Naive thymus-derived CD4-positive, alpha-beta T cell (primary cell): ENCODE measurements at regions of chr11 and their contacts with region 1.

Region 1: DNA sequence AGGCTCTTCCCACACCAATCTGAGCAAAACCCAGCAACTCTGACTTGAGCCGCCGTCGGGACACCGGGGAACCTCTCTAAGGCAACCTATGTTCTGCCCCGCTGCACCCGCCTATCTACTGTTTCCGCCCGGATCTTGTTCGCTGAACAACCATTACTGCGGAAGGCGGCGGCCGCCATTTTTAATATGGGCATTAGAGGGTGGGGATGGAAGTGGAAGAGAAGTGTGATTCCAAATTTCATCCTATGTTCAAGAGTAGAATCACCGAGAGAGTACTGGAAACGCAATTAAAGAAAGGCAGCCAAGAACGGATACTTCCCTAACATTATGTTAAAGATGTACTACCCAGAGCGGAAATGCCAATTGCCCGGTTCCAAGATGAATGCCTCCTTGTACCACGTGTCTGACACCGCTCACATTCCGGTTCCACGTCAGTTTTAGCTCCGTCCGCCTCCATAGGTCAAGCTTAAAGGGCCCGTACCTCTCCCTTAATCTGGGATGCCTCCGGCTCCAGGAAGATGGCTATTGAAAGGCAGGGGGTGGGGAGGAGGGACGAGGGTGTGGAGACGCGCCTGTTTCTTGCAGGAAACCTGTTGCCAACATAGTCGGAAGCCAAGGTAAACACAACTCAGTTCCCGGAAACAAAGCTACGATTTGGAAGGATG is at the start of gene DPAGT1:
- DNase-seq: peak; percentile 68 to 90 (median 86)
- ATAC-seq: peak; percentile 90
- H3K4me3 ChIP-seq: peak within 1 kb of the TSS; percentile 79
- H3K4me3 Mint-ChIP-seq: peak within 1 kb of the TSS; percentile 91 to 100 (median 96)
- H3K27ac ChIP-seq: peak within 1 kb of the TSS; percentile 95
- H3K27ac Mint-ChIP-seq: peak within 1 kb of the TSS; percentile 98 to 100 (median 99)
- H3K4me1 ChIP-seq: peaks cover 21 to 26% of the 10 kb centered on the region in 2 donors
- H3K4me1 Mint-ChIP-seq: peaks cover 24 to 64% (median 50%) of the 10 kb centered on the region in 7 donors
- H3K27me3 ChIP-seq: no peaks in the 10 kb centered on the region
- H3K27me3 Mint-ChIP-seq: no peaks in the 10 kb centered on the region
- total RNA-seq, gene DPAGT1: 21.9 to 63.9 (median 37.9) TPM

Region 2: GRCh38 chr11:119018074-119018938 is 83.6 kb before region 1 on chr11 and contains the starts of genes RPS25 and TRAPPC4:
- CTCF ChIA-PET with region 1: interaction called, 3 read pairs
- POLR2A ChIA-PET with region 1: interaction called, 9 read pairs
- intact Hi-C with region 1: loop called (anchors 1 kb)
- DNase-seq: peak; percentile 87 to 98 (median 96)
- ATAC-seq: peak; percentile 93
- H3K4me3 ChIP-seq: peak within 1 kb of the TSS; percentile 89
- H3K4me3 Mint-ChIP-seq: peak within 1 kb of the TSS; percentile 96 to 100 (median 98)
- H3K27ac ChIP-seq: peak within 1 kb of the TSS; percentile 98
- H3K27ac Mint-ChIP-seq: peak within 1 kb of the TSS; percentile 99 to 100 (median 100)
- H3K4me1 ChIP-seq: peaks cover 30 to 32% of the 10 kb centered on the region in 2 donors
- H3K4me1 Mint-ChIP-seq: peaks cover 21 to 75% (median 50%) of the 10 kb centered on the region in 7 donors
- H3K27me3 ChIP-seq: no peaks in the 10 kb centered on the region
- H3K27me3 Mint-ChIP-seq: no peaks in the 10 kb centered on the region
- total RNA-seq, gene RPS25: 1,535 to 3,042 (median 2,772) TPM
- total RNA-seq, gene TRAPPC4: 70.7 to 80.3 (median 77.8) TPM

Region 3: DNA sequence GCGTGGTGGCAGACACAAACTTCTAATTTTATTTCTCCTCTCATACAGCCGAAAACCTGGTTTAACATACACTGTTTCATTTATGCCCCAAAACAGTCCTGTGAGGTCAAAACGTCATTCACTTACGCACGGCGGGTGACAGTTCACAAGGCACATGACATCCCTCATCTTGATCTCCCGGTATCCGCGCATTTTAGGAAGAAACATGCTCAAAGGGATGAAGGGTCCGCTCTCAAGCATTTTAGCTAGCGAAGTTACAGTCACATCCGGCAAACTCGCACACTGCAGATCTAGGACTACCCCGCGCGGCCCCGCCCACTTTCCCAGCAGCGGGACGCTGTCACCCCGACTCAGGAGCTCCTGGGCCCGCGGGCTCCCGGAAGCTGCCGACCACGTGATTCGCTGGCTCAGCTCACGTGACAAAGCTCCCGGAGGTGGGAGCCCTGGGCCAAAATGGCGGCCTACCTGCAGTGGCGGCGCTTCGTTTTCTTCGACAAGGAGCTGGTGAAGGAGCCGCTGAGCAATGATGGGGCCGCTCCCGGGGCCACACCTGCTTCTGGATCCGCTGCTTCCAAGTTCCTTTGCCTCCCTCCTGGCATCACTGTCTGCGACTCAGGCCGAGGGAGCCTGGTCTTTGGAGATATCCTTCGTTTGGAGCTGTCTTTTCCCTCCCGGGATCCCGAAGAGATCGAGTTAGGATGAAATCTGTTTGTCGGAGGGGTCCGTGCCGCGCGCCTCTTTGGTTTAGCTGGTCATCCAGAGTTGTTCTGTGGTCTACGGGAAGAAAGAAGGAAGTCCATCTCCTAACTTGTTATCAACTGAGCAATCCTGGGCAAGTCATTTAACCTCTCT is 34.3 kb before region 1 on chr11 and contains the start of gene VPS11:
- CTCF ChIA-PET with region 1: interaction called, 4 read pairs
- POLR2A ChIA-PET with region 1: interaction called, 19 read pairs
- intact Hi-C with region 1: loop called (anchors 1 kb)
- DNase-seq: peak; percentile 81 to 98 (median 97)
- ATAC-seq: peak; percentile 93
- H3K4me3 ChIP-seq: peak within 1 kb of the TSS; percentile 93
- H3K4me3 Mint-ChIP-seq: peak within 1 kb of the TSS; percentile 90 to 100 (median 95)
- H3K27ac ChIP-seq: peak within 1 kb of the TSS; percentile 96
- H3K27ac Mint-ChIP-seq: peak within 1 kb of the TSS; percentile 92 to 100 (median 97)
- H3K4me1 ChIP-seq: peaks cover 18 to 23% of the 10 kb centered on the region in 2 donors
- H3K4me1 Mint-ChIP-seq: peaks cover 26 to 59% (median 47%) of the 10 kb centered on the region in 7 donors
- H3K27me3 ChIP-seq: no peaks in the 10 kb centered on the region
- H3K27me3 Mint-ChIP-seq: no peaks in the 10 kb centered on the region
- total RNA-seq, gene VPS11: 39.0 to 73.9 (median 57.1) TPM

Region 4: GRCh38 chr11:119121008-119121810 is 19.3 kb after region 1 on chr11 and contains the start of gene HINFP:
- CTCF ChIA-PET with region 1: interaction called, 13 read pairs
- POLR2A ChIA-PET with region 1: interaction called, 435 read pairs
- intact Hi-C with region 1: loop called (anchors 1 kb)
- DNase-seq: peak; percentile 92 to 100 (median 98)
- ATAC-seq: peak; percentile 99
- H3K4me3 ChIP-seq: peak within 1 kb of the TSS; percentile 71
- H3K4me3 Mint-ChIP-seq: peak within 1 kb of the TSS; percentile 86 to 98 (median 94)
- H3K27ac ChIP-seq: peak within 1 kb of the TSS; percentile 85
- H3K27ac Mint-ChIP-seq: peak within 1 kb of the TSS; percentile 78 to 98 (median 95)
- H3K4me1 ChIP-seq: peaks cover 17 to 23% of the 10 kb centered on the region in 2 donors
- H3K4me1 Mint-ChIP-seq: peaks cover 34 to 58% (median 50%) of the 10 kb centered on the region in 7 donors
- H3K27me3 ChIP-seq: no peaks in the 10 kb centered on the region
- H3K27me3 Mint-ChIP-seq: no peaks in the 10 kb centered on the region
- total RNA-seq, gene HINFP: 30.7 to 79.7 (median 42.7) TPM

Region 5: DNA sequence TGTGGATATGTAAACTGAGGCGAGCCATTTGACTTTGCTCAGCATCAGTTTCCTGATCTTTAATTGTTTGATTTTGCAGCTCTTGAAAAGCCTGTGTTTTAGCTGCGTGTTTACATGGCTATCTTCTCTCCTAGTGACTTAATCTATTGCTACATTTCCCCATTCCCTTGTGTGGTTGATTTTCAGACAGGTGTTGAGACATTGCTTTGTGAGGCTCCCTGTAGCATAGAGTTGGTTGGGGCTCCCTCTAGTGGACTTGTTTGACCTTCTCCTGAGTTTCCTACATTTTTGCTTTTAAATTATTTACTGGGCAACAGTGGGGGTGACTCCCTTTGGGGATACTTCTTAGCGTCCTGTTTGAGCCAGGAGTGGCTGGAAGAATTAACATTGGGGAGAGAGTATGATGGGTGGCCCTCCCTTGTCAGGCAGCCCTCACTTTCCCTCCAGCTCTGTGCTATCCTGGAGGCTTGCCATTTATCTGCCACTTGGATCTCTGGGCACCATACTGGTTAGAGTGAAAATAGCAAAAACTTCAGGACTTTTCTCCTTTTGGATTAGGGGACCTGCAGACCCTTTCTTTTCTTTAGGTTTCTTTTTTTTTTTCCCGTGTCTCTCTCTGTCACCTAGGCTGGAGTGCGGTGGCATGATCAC is 95.1 kb after region 1 on chr11:
- CTCF ChIA-PET with region 1: no interaction called
- POLR2A ChIA-PET with region 1: interaction called, 4 read pairs
- intact Hi-C with region 1: loop called (anchors 1 to 2 kb)
- DNase-seq: peak in 8 of 9 donors; percentile 51 to 84 (median 78)
- ATAC-seq: peak; percentile 98
- H3K4me3 ChIP-seq: no peak overlapping the region
- H3K4me3 Mint-ChIP-seq: no peak overlapping the region
- H3K27ac ChIP-seq: no peak overlapping the region
- H3K27ac Mint-ChIP-seq: no peak overlapping the region
- H3K4me1 ChIP-seq: no peaks in the 10 kb centered on the region
- H3K4me1 Mint-ChIP-seq: peaks cover 0 to 10% (median 5%) of the 10 kb centered on the region in 7 donors
- H3K27me3 ChIP-seq: no peaks in the 10 kb centered on the region
- H3K27me3 Mint-ChIP-seq: peaks cover 0 to 5% (median 0%) of the 10 kb centered on the region in 5 donors